B cell (primary cell): ENCODE measurements at regions of chr14 and their contacts with region 1.

Region 1: DNA sequence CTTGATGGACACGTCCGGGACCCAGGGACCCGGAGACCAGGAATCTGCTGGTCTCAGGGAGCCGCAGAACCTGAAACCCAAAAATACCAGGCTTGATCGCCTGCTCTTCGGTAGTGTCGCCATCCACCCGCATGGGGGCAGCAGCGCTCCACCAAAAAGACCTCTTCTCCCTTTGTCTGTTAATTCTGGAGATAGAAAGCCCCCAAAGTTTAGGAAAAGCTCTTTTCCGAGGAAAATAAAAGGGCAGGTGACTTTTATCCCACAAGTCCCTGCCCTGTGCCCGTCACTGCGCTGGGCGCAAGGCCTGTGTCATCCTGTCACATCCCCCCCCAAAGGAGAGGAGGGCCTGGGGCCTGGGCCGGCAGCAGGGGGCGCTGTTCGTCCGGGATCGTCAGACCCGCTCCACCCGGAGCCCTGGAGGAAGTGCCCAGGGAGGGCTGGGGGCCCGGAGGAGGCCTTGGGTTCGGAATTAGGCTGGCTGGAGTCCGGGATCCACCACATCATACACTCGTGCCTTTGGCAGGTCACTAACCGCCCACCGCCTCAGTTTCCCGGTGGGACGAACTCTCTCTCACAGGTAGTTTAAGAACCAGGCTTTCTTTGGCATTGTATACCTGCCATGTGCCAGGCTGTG is 31.9 kb downstream of the DAD1 start:
- DNase-seq: peak; percentile 93
- ATAC-seq: peak; percentile 42
- H3K4me3 ChIP-seq: peak overlapping the region; percentile 7 to 71 (median 49)
- H3K4me3 Mint-ChIP-seq: peak overlapping the region; percentile 73
- H3K27ac ChIP-seq: peak overlapping the region; percentile 99 to 100
- H3K27ac Mint-ChIP-seq: peak overlapping the region; percentile 97
- H3K4me1 ChIP-seq: peaks cover 61 to 85% of the 10 kb centered on the region in 2 donors
- H3K4me1 Mint-ChIP-seq: peaks cover 84% of the 10 kb centered on the region
- H3K27me3 ChIP-seq: no peaks in the 10 kb centered on the region
- H3K27me3 Mint-ChIP-seq: peaks cover 3% of the 10 kb centered on the region
- CTCF ChIP-seq: peak; percentile 100

Region 2: DNA sequence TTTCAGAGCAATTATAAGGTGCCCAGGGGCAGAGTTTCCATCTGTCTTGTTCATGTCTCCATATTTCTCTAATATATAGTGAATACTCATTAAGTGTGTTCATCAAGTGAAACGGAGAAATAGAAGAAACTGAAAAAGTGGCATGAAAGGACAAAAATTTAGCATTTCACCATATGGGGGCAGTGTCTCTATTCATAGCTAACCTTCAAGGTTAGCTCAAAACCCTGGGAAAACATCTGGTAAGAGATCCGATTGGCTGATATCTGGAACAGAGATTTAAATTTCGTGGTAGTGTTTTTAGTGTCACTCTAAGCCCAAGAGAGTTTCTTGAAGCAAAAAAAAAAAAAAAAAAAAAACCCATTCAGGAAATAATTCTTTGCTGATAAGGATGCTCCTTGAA is 335.6 kb before region 1 on chr14:
- CTCF ChIA-PET with region 1: no interaction called
- POLR2A ChIA-PET with region 1: no interaction called
- intact Hi-C with region 1: loop called (anchors 2 kb)
- DNase-seq: peak; percentile 48
- ATAC-seq: no peak
- H3K4me3 ChIP-seq: no peak overlapping the region
- H3K4me3 Mint-ChIP-seq: no peak overlapping the region
- H3K27ac ChIP-seq: no peak overlapping the region
- H3K27ac Mint-ChIP-seq: no peak overlapping the region
- H3K4me1 ChIP-seq: peaks cover 13 to 15% of the 10 kb centered on the region in 2 donors
- H3K4me1 Mint-ChIP-seq: peaks cover 25% of the 10 kb centered on the region
- H3K27me3 ChIP-seq: peaks cover 0 to 12% (median 7%) of the 10 kb centered on the region in 4 experiments
- H3K27me3 Mint-ChIP-seq: peaks cover 24% of the 10 kb centered on the region
- CTCF ChIP-seq: peak; percentile 66

Region 3: DNA sequence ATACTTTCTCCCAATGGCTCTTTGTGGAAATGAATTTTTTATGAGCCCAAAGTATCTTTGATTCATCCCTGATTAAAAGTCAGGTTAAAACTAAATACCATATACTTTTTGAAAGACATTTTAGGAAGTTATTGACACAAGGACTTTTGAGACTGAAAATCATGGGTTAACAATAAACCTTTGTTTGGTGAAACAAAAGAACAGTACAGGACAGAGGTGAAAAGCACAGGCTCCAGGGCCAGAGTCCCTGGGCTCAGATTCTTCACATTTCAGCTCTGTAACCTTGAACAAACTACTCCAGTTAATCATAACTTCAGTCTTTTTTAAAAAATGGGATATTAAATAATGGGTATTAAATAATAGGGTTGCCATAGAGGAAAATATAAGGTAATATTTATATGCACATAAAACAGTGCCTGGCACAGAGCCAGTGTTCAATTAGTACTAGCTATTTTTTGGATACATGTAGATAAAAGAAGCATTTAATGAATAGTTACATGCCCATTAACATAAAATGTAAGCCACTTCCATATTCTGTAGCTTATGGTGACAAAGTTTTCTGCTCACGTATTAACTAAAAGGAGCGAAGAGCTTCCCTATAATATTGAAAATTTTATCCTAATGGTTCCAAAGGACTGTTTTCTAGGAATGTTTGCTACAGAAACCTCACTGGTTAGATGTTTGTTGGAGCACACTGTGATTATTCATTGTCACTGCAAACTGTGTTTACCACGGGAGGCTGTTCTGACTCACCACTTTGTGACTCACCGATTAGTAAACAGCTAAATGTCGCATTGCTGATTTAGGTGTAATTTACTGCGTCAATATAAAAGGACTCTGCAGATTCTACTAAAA is 223.5 kb before region 1 on chr14:
- CTCF ChIA-PET with region 1: no interaction called
- POLR2A ChIA-PET with region 1: no interaction called
- intact Hi-C with region 1: no loop called
- DNase-seq: no peak
- ATAC-seq: no peak
- H3K4me3 ChIP-seq: no peak overlapping the region
- H3K4me3 Mint-ChIP-seq: no peak overlapping the region
- H3K27ac ChIP-seq: no peak overlapping the region
- H3K27ac Mint-ChIP-seq: no peak overlapping the region
- H3K4me1 ChIP-seq: no peaks in the 10 kb centered on the region
- H3K4me1 Mint-ChIP-seq: peaks cover 3% of the 10 kb centered on the region
- H3K27me3 ChIP-seq: peaks cover 0 to 5% (median 0%) of the 10 kb centered on the region in 4 experiments
- H3K27me3 Mint-ChIP-seq: peaks cover 4% of the 10 kb centered on the region
- CTCF ChIP-seq: no peak

Region 4: GRCh38 chr14:22466491-22466890 is 90.6 kb before region 1 on chr14:
- CTCF ChIA-PET with region 1: interaction called, 157 read pairs
- POLR2A ChIA-PET with region 1: interaction called, 4 read pairs
- intact Hi-C with region 1: no loop called
- DNase-seq: no peak
- ATAC-seq: no peak
- H3K4me3 ChIP-seq: no peak overlapping the region
- H3K4me3 Mint-ChIP-seq: no peak overlapping the region
- H3K27ac ChIP-seq: no peak overlapping the region
- H3K27ac Mint-ChIP-seq: peak overlapping the region; percentile 16
- H3K4me1 ChIP-seq: peaks cover 30 to 48% of the 10 kb centered on the region in 2 donors
- H3K4me1 Mint-ChIP-seq: peaks cover 62% of the 10 kb centered on the region
- H3K27me3 ChIP-seq: no peaks in the 10 kb centered on the region
- H3K27me3 Mint-ChIP-seq: no peaks in the 10 kb centered on the region
- CTCF ChIP-seq: no peak

Region 5: GRCh38 chr14:22505697-22506377 is 51.3 kb before region 1 on chr14:
- CTCF ChIA-PET with region 1: interaction called, 14 read pairs
- POLR2A ChIA-PET with region 1: interaction called, 14 read pairs
- intact Hi-C with region 1: loop called (anchors 1 kb)
- DNase-seq: no peak
- ATAC-seq: peak; percentile 29
- H3K4me3 ChIP-seq: peak overlapping the region in 1 of 5 experiments; percentile 6
- H3K4me3 Mint-ChIP-seq: peak overlapping the region; percentile 74
- H3K27ac ChIP-seq: peak overlapping the region; percentile 38 to 52
- H3K27ac Mint-ChIP-seq: peak overlapping the region; percentile 97
- H3K4me1 ChIP-seq: peaks cover 42 to 58% of the 10 kb centered on the region in 2 donors
- H3K4me1 Mint-ChIP-seq: peaks cover 77% of the 10 kb centered on the region
- H3K27me3 ChIP-seq: no peaks in the 10 kb centered on the region
- H3K27me3 Mint-ChIP-seq: no peaks in the 10 kb centered on the region
- CTCF ChIP-seq: no peak

Region 6: DNA sequence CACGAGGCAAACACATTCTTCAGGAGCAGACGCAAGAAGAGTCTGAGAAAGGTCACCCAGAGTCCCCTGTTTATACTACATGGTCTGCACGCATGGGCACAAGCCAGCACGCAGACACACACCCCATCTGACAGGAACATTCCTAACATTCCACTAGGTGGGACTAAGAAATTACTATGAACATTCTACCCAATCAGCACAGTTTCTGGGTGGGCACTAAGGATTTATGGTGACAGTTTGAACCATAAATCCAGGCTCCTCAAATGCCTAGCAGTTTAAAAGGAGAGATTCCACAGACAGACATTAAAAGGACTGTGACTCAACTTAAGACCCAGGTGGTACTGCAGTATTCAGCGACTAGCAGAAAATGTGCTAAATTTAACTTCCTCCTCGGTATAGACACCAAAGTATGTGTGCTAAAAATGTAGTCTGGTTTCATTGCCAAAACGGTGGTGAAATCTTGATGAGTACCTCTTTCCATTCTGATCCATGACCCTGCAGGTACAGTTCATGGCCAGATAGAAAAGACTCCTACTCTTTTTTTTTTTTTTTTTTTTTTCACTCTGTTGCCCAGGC is 57.2 kb after region 1 on chr14:
- CTCF ChIA-PET with region 1: no interaction called
- POLR2A ChIA-PET with region 1: no interaction called
- intact Hi-C with region 1: no loop called
- DNase-seq: no peak
- ATAC-seq: no peak
- H3K4me3 ChIP-seq: no peak overlapping the region
- H3K4me3 Mint-ChIP-seq: no peak overlapping the region
- H3K27ac ChIP-seq: no peak overlapping the region
- H3K27ac Mint-ChIP-seq: no peak overlapping the region
- H3K4me1 ChIP-seq: no peaks in the 10 kb centered on the region
- H3K4me1 Mint-ChIP-seq: no peaks in the 10 kb centered on the region
- H3K27me3 ChIP-seq: no peaks in the 10 kb centered on the region
- H3K27me3 Mint-ChIP-seq: no peaks in the 10 kb centered on the region
- CTCF ChIP-seq: no peak

Region 7: GRCh38 chr14:22634233-22634900 is 77.3 kb after region 1 on chr14:
- CTCF ChIA-PET with region 1: no interaction called
- POLR2A ChIA-PET with region 1: no interaction called
- intact Hi-C with region 1: no loop called
- DNase-seq: no peak
- ATAC-seq: no peak
- H3K4me3 ChIP-seq: no peak overlapping the region
- H3K4me3 Mint-ChIP-seq: no peak overlapping the region
- H3K27ac ChIP-seq: no peak overlapping the region
- H3K27ac Mint-ChIP-seq: no peak overlapping the region
- H3K4me1 ChIP-seq: no peaks in the 10 kb centered on the region
- H3K4me1 Mint-ChIP-seq: no peaks in the 10 kb centered on the region
- H3K27me3 ChIP-seq: peaks cover 0 to 9% (median 0%) of the 10 kb centered on the region in 4 experiments
- H3K27me3 Mint-ChIP-seq: peaks cover 33% of the 10 kb centered on the region
- CTCF ChIP-seq: no peak

Region 8: DNA sequence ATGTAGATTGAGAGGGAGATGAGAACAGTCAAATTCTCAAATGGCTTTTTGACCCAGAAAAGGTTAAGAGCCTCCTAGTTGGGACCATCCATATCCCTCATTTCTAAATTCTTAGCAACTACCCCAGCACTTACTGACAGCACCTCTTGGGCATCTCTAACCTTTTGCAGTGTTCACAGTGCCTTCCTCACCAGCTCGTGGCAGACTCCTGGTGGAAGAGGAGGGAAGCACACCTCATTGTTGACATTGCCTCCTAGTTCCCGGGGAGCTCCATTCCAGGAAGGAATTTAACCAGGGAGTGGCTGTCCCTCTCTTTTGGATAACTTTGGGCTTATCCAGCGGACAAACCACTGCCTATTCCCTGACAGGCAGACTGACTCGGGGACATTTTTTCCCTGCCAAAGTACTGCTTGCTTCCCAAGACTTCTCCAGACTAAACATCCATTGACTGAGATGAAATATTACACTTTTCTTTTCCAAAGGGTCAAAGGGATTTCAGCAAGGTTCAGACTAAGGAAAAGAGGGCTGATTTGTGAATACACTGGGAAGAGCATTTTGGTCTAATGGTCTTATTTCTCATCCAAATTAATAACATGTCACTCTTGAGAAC is 96.0 kb after region 1 on chr14:
- CTCF ChIA-PET with region 1: interaction called, 12 read pairs
- POLR2A ChIA-PET with region 1: no interaction called
- intact Hi-C with region 1: loop called (anchors 1 kb)
- DNase-seq: peak; percentile 55
- ATAC-seq: peak; percentile 60
- H3K4me3 ChIP-seq: no peak overlapping the region
- H3K4me3 Mint-ChIP-seq: no peak overlapping the region
- H3K27ac ChIP-seq: no peak overlapping the region
- H3K27ac Mint-ChIP-seq: no peak overlapping the region
- H3K4me1 ChIP-seq: no peaks in the 10 kb centered on the region
- H3K4me1 Mint-ChIP-seq: no peaks in the 10 kb centered on the region
- H3K27me3 ChIP-seq: peaks cover 0 to 3% (median 0%) of the 10 kb centered on the region in 4 experiments
- H3K27me3 Mint-ChIP-seq: no peaks in the 10 kb centered on the region
- CTCF ChIP-seq: peak; percentile 73

Region 9: DNA sequence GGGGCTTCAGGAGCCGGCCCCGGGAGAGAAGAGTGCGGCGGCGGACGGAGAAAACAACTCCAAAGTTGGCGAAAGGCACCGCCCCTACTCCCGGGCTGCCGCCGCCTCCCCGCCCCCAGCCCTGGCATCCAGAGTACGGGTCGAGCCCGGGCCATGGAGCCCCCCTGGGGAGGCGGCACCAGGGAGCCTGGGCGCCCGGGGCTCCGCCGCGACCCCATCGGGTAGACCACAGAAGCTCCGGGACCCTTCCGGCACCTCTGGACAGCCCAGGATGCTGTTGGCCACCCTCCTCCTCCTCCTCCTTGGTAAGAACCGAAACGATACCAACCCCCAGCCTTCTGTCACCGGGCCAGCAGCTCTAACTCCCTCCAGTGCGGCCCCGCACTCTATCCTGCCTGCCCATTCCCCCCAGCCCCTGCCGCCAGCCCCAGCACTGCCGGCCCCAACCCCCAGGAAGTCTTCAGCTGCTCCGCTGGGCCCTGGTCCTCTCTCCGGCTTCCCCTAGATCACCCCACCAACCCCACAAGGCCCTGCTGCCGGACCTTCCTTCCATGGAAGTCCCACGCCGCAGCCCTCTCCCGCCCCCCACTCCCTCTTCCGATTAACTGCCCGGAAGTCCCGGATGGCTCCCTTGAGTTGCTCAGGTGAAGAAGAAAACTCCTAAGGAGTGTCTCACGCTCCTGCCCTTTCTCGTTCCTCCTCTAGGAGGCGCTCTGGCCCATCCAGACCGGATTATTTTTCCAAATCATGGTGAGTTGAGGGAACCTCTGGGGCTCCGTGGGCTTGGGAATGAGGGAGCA is 315.1 kb after region 1 on chr14:
- CTCF ChIA-PET with region 1: no interaction called
- POLR2A ChIA-PET with region 1: no interaction called
- intact Hi-C with region 1: loop called (anchors 1 kb)
- DNase-seq: peak; percentile 83
- ATAC-seq: peak; percentile 22
- H3K4me3 ChIP-seq: peak overlapping the region; percentile 79 to 97 (median 92)
- H3K4me3 Mint-ChIP-seq: peak overlapping the region; percentile 96
- H3K27ac ChIP-seq: peak overlapping the region; percentile 84 to 88
- H3K27ac Mint-ChIP-seq: peak overlapping the region; percentile 98
- H3K4me1 ChIP-seq: peaks cover 19 to 35% of the 10 kb centered on the region in 2 donors
- H3K4me1 Mint-ChIP-seq: peaks cover 34% of the 10 kb centered on the region
- H3K27me3 ChIP-seq: no peaks in the 10 kb centered on the region
- H3K27me3 Mint-ChIP-seq: no peaks in the 10 kb centered on the region
- CTCF ChIP-seq: peak; percentile 90